ENCODE measurements at regions of chr2 and their contacts with region 1.

Region 1: GRCh38 chr2:95207111-95207961 is at the start of gene ZNF892:
- DNase-seq: peak; percentile 50 to 83 (median 63)
- ATAC-seq: peak; percentile 95
- H3K4me3 ChIP-seq: peak within 1 kb of the TSS; percentile 89
- H3K4me3 Mint-ChIP-seq: peak within 1 kb of the TSS; percentile 92 to 96 (median 94)
- H3K27ac ChIP-seq: peak within 1 kb of the TSS; percentile 85
- H3K27ac Mint-ChIP-seq: peak within 1 kb of the TSS; percentile 75 to 89 (median 81)
- H3K4me1 ChIP-seq: peaks cover 7 to 9% of the 10 kb centered on the region in 2 donors
- H3K4me1 Mint-ChIP-seq: peaks cover 17 to 37% (median 27%) of the 10 kb centered on the region in 7 donors
- H3K27me3 ChIP-seq: no peaks in the 10 kb centered on the region
- H3K27me3 Mint-ChIP-seq: no peaks in the 10 kb centered on the region
- total RNA-seq, gene ZNF892: 1.7 to 6.4 (median 4.3) TPM

Region 2: GRCh38 chr2:94874277-94875008 is 332.9 kb before region 1 on chr2:
- CTCF ChIA-PET with region 1: no interaction called
- POLR2A ChIA-PET with region 1: no interaction called
- intact Hi-C with region 1: loop called in 1 of 2 experiments (anchors 1 kb)
- DNase-seq: peak in 8 of 9 donors; percentile 24 to 76 (median 50)
- ATAC-seq: peak; percentile 84
- H3K4me3 ChIP-seq: no peak overlapping the region
- H3K4me3 Mint-ChIP-seq: no peak overlapping the region
- H3K27ac ChIP-seq: no peak overlapping the region
- H3K27ac Mint-ChIP-seq: peak overlapping the region in 1 of 9 donors; percentile 48
- H3K4me1 ChIP-seq: no peaks in the 10 kb centered on the region
- H3K4me1 Mint-ChIP-seq: no peaks in the 10 kb centered on the region
- H3K27me3 ChIP-seq: no peaks in the 10 kb centered on the region
- H3K27me3 Mint-ChIP-seq: peaks cover 0 to 26% (median 4%) of the 10 kb centered on the region in 5 donors

Region 3: GRCh38 chr2:95121407-95122196 is 85.7 kb before region 1 on chr2 and contains the start of gene MRPS5:
- CTCF ChIA-PET with region 1: no interaction called
- POLR2A ChIA-PET with region 1: interaction called, 4 read pairs
- intact Hi-C with region 1: loop called (anchors 1 kb)
- DNase-seq: peak; percentile 63 to 95 (median 72)
- ATAC-seq: peak; percentile 98
- H3K4me3 ChIP-seq: peak within 1 kb of the TSS; percentile 74
- H3K4me3 Mint-ChIP-seq: peak within 1 kb of the TSS; percentile 91 to 99 (median 96)
- H3K27ac ChIP-seq: peak within 1 kb of the TSS; percentile 91
- H3K27ac Mint-ChIP-seq: peak within 1 kb of the TSS; percentile 92 to 97 (median 94)
- H3K4me1 ChIP-seq: peaks cover 19 to 27% of the 10 kb centered on the region in 2 donors
- H3K4me1 Mint-ChIP-seq: peaks cover 38 to 58% (median 52%) of the 10 kb centered on the region in 7 donors
- H3K27me3 ChIP-seq: no peaks in the 10 kb centered on the region
- H3K27me3 Mint-ChIP-seq: no peaks in the 10 kb centered on the region
- total RNA-seq, gene MRPS5: 26.3 to 72.9 (median 60.5) TPM

Region 4: GRCh38 chr2:95159690-95160449 is 47.5 kb before region 1 on chr2 and contains the start of gene ZNF514:
- CTCF ChIA-PET with region 1: no interaction called
- POLR2A ChIA-PET with region 1: interaction called, 4 read pairs
- intact Hi-C with region 1: loop called (anchors 1 kb)
- DNase-seq: peak; percentile 69 to 85 (median 72)
- ATAC-seq: peak; percentile 95
- H3K4me3 ChIP-seq: peak within 1 kb of the TSS; percentile 83
- H3K4me3 Mint-ChIP-seq: peak within 1 kb of the TSS; percentile 86 to 94 (median 90)
- H3K27ac ChIP-seq: peak within 1 kb of the TSS; percentile 75
- H3K27ac Mint-ChIP-seq: peak within 1 kb of the TSS; percentile 82 to 94 (median 87)
- H3K4me1 ChIP-seq: peaks cover 0 to 13% of the 10 kb centered on the region in 2 donors
- H3K4me1 Mint-ChIP-seq: peaks cover 12 to 34% (median 30%) of the 10 kb centered on the region in 7 donors
- H3K27me3 ChIP-seq: no peaks in the 10 kb centered on the region
- H3K27me3 Mint-ChIP-seq: no peaks in the 10 kb centered on the region
- total RNA-seq, gene ZNF514: 10.6 to 39.9 (median 16.6) TPM

Region 5: DNA sequence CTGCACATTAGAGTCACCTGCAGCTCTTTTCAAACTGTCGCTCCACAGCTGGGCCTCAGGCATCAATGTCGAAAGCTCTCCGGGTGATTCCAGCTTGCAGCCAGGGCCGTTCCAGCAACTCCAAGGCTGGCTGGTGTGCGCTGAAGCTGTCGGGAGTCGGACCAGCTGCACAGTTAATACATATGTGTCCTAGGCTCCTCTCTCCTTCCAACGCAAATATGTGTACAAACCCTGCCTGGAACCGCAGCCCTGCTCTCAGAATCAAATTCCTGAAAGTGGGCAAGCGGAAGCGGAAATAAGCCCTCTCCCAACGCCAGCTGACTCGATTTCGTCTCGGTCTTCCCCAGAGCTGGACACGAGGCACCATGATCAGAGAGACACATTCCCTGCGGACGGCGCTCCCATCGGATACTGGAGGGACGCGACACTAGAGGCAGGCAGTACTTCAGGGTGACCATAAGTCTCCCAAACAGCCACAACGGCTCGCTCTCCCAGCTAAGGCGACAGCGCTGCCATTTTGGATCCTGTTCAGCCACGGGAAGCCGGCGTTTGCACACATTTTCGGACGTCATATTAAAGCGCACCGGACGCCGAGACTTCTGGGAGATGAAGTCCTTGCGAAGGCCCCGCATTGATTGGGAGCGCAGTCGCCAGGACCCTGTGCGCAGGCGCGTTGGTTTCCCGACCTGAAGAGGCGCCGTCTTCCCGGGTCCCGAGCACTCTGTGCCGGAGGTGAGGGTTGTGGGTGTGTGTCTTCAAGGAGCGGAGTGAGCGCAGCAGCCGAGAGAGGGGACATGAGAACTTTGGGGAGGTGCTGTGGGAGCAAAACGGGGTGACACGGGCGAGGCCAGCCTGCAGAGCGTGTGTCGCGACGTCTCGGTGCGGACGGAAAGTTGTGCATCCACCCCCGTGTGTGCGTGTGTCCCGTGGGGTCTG is 41.9 kb before region 1 on chr2 and contains the start of gene ZNF2:
- CTCF ChIA-PET with region 1: no interaction called
- POLR2A ChIA-PET with region 1: interaction called, 3 read pairs
- intact Hi-C with region 1: loop called (anchors 1 kb)
- DNase-seq: peak; percentile 92 to 98 (median 96)
- ATAC-seq: peak; percentile 97
- H3K4me3 ChIP-seq: peak within 1 kb of the TSS; percentile 91
- H3K4me3 Mint-ChIP-seq: peak within 1 kb of the TSS; percentile 97 to 100 (median 99)
- H3K27ac ChIP-seq: peak within 1 kb of the TSS; percentile 82
- H3K27ac Mint-ChIP-seq: peak within 1 kb of the TSS; percentile 91 to 99 (median 96)
- H3K4me1 ChIP-seq: peaks cover 4 to 13% of the 10 kb centered on the region in 2 donors
- H3K4me1 Mint-ChIP-seq: peaks cover 23 to 54% (median 42%) of the 10 kb centered on the region in 7 donors
- H3K27me3 ChIP-seq: no peaks in the 10 kb centered on the region
- H3K27me3 Mint-ChIP-seq: no peaks in the 10 kb centered on the region
- total RNA-seq, gene ZNF2: 1.5 to 10.2 (median 3.4) TPM